ENCODE measurements at regions of chr14 and their contacts with region 1.

Region 1: GRCh38 chr14:70043001-70043400 is 145.8 kb downstream of the SLC8A3 start:
- DNase-seq: no peak
- H3K4me3 ChIP-seq: no peak overlapping the region
- H3K27ac ChIP-seq: no peak overlapping the region
- H3K4me1 ChIP-seq: no peaks in the 10 kb centered on the region
- H3K27me3 ChIP-seq: no peaks in the 10 kb centered on the region
- CTCF ChIP-seq: no peak

Region 2: DNA sequence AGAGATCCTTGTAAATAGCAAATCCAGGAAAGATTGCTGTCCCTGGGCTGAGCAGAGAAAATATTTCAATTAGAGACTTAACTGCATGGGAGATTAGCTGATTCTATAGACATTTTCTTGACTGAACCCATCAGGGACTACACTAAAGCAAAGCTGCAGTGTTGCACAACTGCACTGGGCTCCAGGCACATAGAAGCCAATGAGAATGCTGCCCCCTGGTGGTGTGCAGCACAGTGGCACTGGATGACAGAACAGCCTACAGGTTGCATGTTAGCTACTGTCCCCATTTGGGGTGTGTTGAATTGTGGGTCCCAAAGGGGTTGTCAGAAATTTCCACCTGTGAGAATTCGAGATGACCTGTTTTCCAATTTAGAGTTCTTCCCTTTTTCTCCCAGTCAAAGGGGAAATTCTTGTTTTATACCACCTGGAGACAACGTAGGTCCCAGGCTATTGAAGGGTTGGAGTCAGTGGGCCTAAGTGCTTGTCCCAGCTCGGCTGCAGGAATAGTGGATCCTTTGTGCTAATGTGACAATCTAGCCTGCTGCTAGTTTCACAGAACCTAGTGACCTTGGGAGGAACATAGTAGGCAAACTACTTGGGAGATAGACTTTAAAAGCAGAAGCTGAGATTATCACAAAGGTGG is 31.0 kb after region 1 on chr14:
- intact Hi-C with region 1: loop called (anchors 5 kb)
- DNase-seq: peak; percentile 75
- H3K4me3 ChIP-seq: no peak overlapping the region
- H3K27ac ChIP-seq: no peak overlapping the region
- H3K4me1 ChIP-seq: no peaks in the 10 kb centered on the region
- H3K27me3 ChIP-seq: no peaks in the 10 kb centered on the region
- CTCF ChIP-seq: peak; percentile 78